PC-3 (cell line): ENCODE measurements at regions of chrX and their contacts with region 1.

Region 1: GRCh38 chrX:110317820-110318658 is at the start of gene AMMECR1:
- DNase-seq: peak; percentile 85
- ATAC-seq: peak; percentile 74
- H3K4me3 ChIP-seq: peak within 1 kb of the TSS; percentile 80
- H3K27ac ChIP-seq: peak within 1 kb of the TSS; percentile 73
- H3K4me1 ChIP-seq: peaks cover 29% of the 10 kb centered on the region
- H3K27me3 ChIP-seq: no peaks in the 10 kb centered on the region
- CTCF ChIP-seq: no peak
- total RNA-seq, gene AMMECR1: 12.7 and 14.2 TPM in 2 replicates

Region 2: GRCh38 chrX:110156167-110156754 is 161.8 kb before region 1 on chrX:
- CTCF ChIA-PET with region 1: no interaction called
- POLR2A ChIA-PET with region 1: no interaction called
- intact Hi-C with region 1: loop called (anchors 2 kb)
- DNase-seq: peak; percentile 52
- ATAC-seq: no peak
- H3K4me3 ChIP-seq: no peak overlapping the region
- H3K27ac ChIP-seq: no peak overlapping the region
- H3K4me1 ChIP-seq: peaks cover 7% of the 10 kb centered on the region
- H3K27me3 ChIP-seq: no peaks in the 10 kb centered on the region
- CTCF ChIP-seq: peak; percentile 54

Region 3: GRCh38 chrX:110167952-110168451 is 150.0 kb before region 1 on chrX:
- CTCF ChIA-PET with region 1: no interaction called
- POLR2A ChIA-PET with region 1: no interaction called
- intact Hi-C with region 1: no loop called
- DNase-seq: peak; percentile 30
- ATAC-seq: no peak
- H3K4me3 ChIP-seq: no peak overlapping the region
- H3K27ac ChIP-seq: no peak overlapping the region
- H3K4me1 ChIP-seq: peaks cover 21% of the 10 kb centered on the region
- H3K27me3 ChIP-seq: no peaks in the 10 kb centered on the region
- CTCF ChIP-seq: peak; percentile 63

Region 4: GRCh38 chrX:110210417-110211139 is 107.5 kb before region 1 on chrX:
- CTCF ChIA-PET with region 1: interaction called, 5 read pairs
- POLR2A ChIA-PET with region 1: interaction called, 4 read pairs
- intact Hi-C with region 1: loop called (anchors 5 kb)
- DNase-seq: peak; percentile 84
- ATAC-seq: peak; percentile 90
- H3K4me3 ChIP-seq: peak overlapping the region; percentile 37; the same call in 1 of the 2 replicates
- H3K27ac ChIP-seq: peak overlapping the region; percentile 94
- H3K4me1 ChIP-seq: peaks cover 43% of the 10 kb centered on the region
- H3K27me3 ChIP-seq: no peaks in the 10 kb centered on the region
- CTCF ChIP-seq: no peak

Region 5: DNA sequence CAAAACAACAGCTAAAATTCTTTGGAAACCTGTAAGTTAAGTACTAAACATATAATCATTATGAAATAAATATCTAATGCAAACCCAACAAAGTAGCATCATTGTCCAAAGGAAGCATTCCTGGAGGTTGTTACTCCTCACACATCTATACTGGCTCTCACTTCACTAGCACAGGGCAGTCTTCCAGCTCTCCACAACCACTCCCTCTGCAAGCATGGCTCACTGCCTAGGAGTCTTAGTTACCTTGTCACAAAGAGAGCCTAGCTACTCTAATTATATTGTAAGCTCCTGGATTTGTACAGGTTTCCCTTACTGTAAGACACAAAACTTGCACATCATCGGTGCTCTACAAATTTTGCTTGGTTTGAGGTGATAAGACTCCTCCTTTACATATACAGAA is 76.2 kb before region 1 on chrX:
- CTCF ChIA-PET with region 1: no interaction called
- POLR2A ChIA-PET with region 1: no interaction called
- intact Hi-C with region 1: loop called (anchors 2 kb)
- DNase-seq: peak; percentile 57
- ATAC-seq: peak; percentile 90
- H3K4me3 ChIP-seq: no peak overlapping the region
- H3K27ac ChIP-seq: peak overlapping the region; percentile 25; the same call in 1 of the 2 replicates
- H3K4me1 ChIP-seq: peaks cover 24% of the 10 kb centered on the region
- H3K27me3 ChIP-seq: no peaks in the 10 kb centered on the region
- CTCF ChIP-seq: no peak

Region 6: DNA sequence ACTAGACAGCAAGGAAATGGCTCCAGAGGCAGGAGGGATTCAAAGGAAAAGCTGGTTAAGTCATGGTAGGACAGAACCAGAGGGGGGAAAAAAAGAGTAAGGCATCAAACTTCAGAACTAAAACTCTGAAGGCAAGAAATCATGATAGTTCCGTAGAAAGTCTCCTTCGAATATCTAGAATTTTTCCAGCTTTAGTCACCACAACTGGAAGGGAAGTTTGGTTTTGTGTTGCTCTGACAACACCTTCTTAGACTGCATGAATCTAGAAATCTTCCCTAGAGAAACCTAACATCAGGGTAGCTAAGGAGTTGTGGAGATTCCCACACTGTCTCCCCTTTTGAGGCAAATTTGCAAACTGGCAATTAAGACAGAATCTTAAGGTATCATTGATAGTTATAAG is 33.9 kb before region 1 on chrX:
- CTCF ChIA-PET with region 1: no interaction called
- POLR2A ChIA-PET with region 1: interaction called, 3 read pairs
- intact Hi-C with region 1: loop called (anchors 5 kb)
- DNase-seq: peak; percentile 83
- ATAC-seq: peak; percentile 68
- H3K4me3 ChIP-seq: no peak overlapping the region
- H3K27ac ChIP-seq: peak overlapping the region; percentile 92
- H3K4me1 ChIP-seq: peaks cover 59% of the 10 kb centered on the region
- H3K27me3 ChIP-seq: no peaks in the 10 kb centered on the region
- CTCF ChIP-seq: no peak

Region 7: GRCh38 chrX:110341189-110342035 is 23.4 kb after region 1 on chrX:
- CTCF ChIA-PET with region 1: interaction called, 9 read pairs
- POLR2A ChIA-PET with region 1: no interaction called
- intact Hi-C with region 1: loop called (anchors 2 kb)
- DNase-seq: peak; percentile 78
- ATAC-seq: peak; percentile 99
- H3K4me3 ChIP-seq: peak overlapping the region; percentile 52; the same call in 1 of the 2 replicates
- H3K27ac ChIP-seq: peak overlapping the region; percentile 92
- H3K4me1 ChIP-seq: peaks cover 20% of the 10 kb centered on the region
- H3K27me3 ChIP-seq: no peaks in the 10 kb centered on the region
- CTCF ChIP-seq: no peak

Region 8: DNA sequence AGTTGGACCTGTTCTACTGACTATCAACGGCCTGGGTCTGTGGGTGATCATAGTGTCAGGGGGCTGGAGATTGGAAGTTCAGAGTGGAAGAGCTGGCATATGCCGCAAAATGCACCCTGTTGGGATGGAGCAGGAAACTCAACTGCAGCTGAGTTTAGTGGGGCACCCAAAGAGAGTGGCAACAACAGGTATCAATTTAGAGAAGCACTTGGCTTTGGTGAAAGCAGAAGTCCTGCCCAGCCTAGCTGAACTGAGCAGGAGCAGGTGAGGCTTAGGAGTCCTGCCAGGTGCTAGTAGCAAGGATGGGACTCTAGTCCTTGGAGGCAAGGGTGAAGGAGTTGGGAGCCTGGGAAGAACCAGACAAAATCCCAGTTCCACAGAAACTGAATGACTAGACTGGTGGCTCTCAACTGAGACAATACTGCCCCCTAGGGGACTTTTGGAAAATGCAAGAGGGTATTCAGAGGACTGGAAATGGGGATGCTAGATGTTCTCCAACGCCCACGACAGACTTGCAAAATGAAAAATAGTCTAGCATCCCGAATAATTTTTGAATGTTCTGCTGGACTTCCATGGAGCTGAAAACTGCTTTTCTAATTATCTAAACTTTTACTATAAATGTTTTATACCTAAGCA is 90.0 kb after region 1 on chrX:
- CTCF ChIA-PET with region 1: no interaction called
- POLR2A ChIA-PET with region 1: no interaction called
- intact Hi-C with region 1: loop called (anchors 2 kb)
- DNase-seq: peak; percentile 84
- ATAC-seq: peak; percentile 64
- H3K4me3 ChIP-seq: no peak overlapping the region
- H3K27ac ChIP-seq: no peak overlapping the region
- H3K4me1 ChIP-seq: peaks cover 45% of the 10 kb centered on the region
- H3K27me3 ChIP-seq: no peaks in the 10 kb centered on the region
- CTCF ChIP-seq: peak; percentile 78